Breast epithelium (tissue), 4 donors: ENCODE measurements at regions of chr3 and their contacts with region 1.

Region 1: DNA sequence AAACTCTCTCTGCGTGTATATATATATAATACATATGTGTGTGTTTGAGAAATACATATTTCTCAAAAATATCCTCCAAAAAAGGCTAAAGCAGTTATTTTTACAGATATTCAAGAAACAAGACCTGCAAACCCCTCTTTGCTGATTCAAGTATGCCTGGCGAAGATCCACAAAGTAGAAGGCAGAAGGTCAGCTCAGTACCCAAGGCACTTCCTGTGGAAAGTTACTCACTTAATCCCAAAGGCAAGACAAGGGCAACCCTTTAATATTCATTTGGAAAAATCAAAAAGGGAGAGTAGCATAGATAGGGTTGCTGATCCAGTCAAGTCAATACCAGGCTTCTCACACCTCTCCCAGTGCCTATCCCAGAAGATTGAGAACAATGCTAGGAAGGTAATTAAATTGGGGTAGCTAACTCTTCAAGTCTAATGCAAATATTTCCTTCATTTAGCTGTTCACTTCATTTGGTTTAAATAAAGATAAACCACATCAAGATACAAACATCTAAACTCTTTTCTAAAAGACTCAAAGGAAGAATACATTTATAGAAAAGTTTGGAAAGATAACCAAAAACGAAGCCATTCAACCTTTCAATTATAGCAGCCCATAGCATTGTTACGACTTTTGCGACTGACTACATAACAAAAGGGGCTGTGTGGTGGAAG is 7.2 kb downstream of the COX17 start:
- DNase-seq: no peak
- H3K4me3 ChIP-seq: no peak overlapping the region
- H3K27ac ChIP-seq: peak overlapping the region in 1 of 2 donors; percentile 3
- H3K4me1 ChIP-seq: no peaks in the 10 kb centered on the region
- H3K27me3 ChIP-seq: no peaks in the 10 kb centered on the region
- CTCF ChIP-seq: no peak
- POLR2A ChIP-seq: no peak

Region 2: DNA sequence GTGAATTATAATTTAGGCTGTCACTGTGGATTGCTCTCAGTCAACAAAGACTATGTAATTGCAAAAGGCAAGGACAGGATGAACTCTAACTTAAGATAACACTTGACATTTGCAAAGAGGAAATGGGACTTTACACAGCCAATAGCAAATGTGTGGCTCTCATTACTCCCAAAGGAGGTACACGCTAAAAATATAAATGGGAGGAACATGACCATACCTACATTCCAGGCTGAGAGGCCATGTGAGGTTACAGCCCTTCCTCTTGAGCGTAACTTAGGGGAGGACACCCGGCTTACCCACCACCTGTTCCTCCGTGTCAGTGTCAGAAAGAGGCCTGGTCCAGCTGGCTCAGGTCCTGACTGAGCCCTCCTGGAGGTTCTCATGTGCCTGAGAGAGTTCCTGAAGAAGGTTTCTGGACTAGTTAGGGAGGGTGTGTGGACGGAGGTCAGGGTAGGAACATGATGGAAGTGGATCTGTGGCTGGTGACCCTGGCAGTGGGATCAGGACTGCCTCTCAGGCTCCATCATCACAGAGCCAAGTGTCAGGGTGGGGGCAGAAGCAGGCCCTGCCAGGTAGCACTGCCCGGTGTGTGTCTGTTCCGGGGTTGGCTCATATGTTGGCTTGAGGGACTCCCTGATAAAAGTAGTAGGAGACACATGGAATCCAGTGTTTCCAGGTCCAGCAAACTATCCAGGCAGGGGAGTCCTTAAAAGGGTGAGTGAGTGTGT is 17.6 kb before region 1 on chr3:
- intact Hi-C with region 1: loop called (anchors 1 kb)
- DNase-seq: no peak
- H3K4me3 ChIP-seq: no peak overlapping the region
- H3K27ac ChIP-seq: peak overlapping the region in 1 of 2 donors; percentile 21
- H3K4me1 ChIP-seq: no peaks in the 10 kb centered on the region
- H3K27me3 ChIP-seq: no peaks in the 10 kb centered on the region
- CTCF ChIP-seq: no peak
- POLR2A ChIP-seq: no peak